PC-3 (cell line): ENCODE measurements at regions of chr11 and their contacts with region 1.

Region 1: DNA sequence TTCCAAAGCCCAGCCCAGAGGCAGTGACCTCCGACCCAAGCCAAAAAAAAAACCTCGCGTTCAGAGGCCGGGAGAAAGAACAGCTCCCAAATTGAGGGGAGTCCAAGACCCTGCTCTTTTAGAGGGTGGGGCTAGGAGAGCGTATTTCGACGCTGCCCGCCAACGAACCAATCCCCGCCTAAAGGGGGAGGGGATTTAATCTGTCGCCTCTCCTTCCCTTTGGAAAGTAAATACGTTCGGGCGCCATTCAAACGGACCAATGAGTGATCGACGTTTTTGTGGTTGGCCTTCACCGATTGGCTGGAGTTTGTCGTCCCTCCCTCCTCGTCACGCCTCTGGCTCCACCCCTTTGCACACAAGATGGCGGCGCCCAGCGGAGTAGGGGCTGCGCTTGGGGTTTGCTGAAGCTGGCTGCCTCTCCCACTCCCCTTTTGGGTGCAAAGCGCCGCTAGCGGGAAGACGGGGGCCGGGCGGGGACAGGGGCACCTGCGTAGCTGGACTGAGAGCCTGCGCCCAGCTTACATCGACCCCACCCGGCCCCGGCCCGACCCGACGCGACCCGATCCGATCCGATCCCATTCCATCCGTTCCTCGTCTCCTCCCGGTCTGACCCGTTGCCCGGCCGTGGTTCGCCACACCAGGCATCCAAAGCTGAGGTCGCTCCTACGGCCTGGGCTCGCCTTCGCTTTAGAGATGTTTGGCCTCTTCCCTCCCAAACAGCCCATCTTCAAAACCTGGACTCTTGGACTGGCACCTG is at the start of gene RNF26:
- DNase-seq: peak; percentile 99
- ATAC-seq: peak; percentile 80
- H3K4me3 ChIP-seq: peak within 1 kb of the TSS; percentile 87
- H3K27ac ChIP-seq: peak within 1 kb of the TSS; percentile 52
- H3K4me1 ChIP-seq: peaks cover 42% of the 10 kb centered on the region
- H3K27me3 ChIP-seq: no peaks in the 10 kb centered on the region
- CTCF ChIP-seq: no peak
- total RNA-seq, gene RNF26: 22.9 and 34.5 TPM in 2 replicates

Region 2: GRCh38 chr11:119317592-119318303 is 16.6 kb before region 1 on chr11:
- CTCF ChIA-PET with region 1: interaction called, 21 read pairs
- POLR2A ChIA-PET with region 1: interaction called, 18 read pairs
- intact Hi-C with region 1: no loop called
- DNase-seq: no peak
- ATAC-seq: no peak
- H3K4me3 ChIP-seq: peak overlapping the region; percentile 43; the same call in 1 of the 2 replicates
- H3K27ac ChIP-seq: peak overlapping the region; percentile 64
- H3K4me1 ChIP-seq: peaks cover 50% of the 10 kb centered on the region
- H3K27me3 ChIP-seq: no peaks in the 10 kb centered on the region
- CTCF ChIP-seq: no peak

Region 3: DNA sequence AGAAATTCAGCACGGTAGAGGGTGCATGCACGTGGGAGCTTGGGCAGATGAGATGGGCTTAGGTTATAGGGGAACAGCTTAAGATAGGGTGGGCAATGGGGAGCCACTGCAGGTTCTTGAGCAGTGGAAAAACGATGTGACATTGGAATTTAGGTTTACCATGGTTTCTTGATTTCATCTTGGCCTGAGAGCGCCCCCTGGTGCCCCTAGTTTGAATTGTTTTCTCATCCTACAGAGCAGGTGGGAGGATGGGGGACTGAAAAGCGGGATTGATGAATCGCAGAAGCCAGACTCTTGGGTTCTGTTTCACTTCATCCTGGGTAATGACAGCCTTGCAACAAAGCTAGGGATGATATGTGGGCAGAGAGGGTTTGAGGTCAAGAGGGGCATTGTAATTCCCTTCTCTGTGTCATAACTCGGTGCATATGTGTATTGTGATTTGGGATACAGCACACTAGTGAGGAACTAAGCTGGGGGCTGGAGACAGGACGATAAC is 10.8 kb before region 1 on chr11:
- CTCF ChIA-PET with region 1: interaction called, 21 read pairs
- POLR2A ChIA-PET with region 1: interaction called, 3 read pairs
- intact Hi-C with region 1: loop called (anchors 1 kb)
- DNase-seq: peak; percentile 86
- ATAC-seq: 0 out of 2 replicates have a peak, but pooled peaks have one; percentile 4
- H3K4me3 ChIP-seq: no peak overlapping the region
- H3K27ac ChIP-seq: no peak overlapping the region
- H3K4me1 ChIP-seq: peaks cover 21% of the 10 kb centered on the region
- H3K27me3 ChIP-seq: no peaks in the 10 kb centered on the region
- CTCF ChIP-seq: peak; percentile 95

Region 4: GRCh38 chr11:119373921-119374631 is 39.7 kb after region 1 on chr11:
- CTCF ChIA-PET with region 1: interaction called, 28 read pairs
- POLR2A ChIA-PET with region 1: interaction called, 3 read pairs
- intact Hi-C with region 1: loop called (anchors 1 kb)
- DNase-seq: peak; percentile 89
- ATAC-seq: peak; percentile 84
- H3K4me3 ChIP-seq: no peak overlapping the region
- H3K27ac ChIP-seq: no peak overlapping the region
- H3K4me1 ChIP-seq: peaks cover 14% of the 10 kb centered on the region
- H3K27me3 ChIP-seq: no peaks in the 10 kb centered on the region
- CTCF ChIP-seq: peak; percentile 98

Region 5: GRCh38 chr11:119400860-119401259 is 66.5 kb after region 1 on chr11:
- CTCF ChIA-PET with region 1: no interaction called
- POLR2A ChIA-PET with region 1: no interaction called
- intact Hi-C with region 1: no loop called
- DNase-seq: no peak
- ATAC-seq: no peak
- H3K4me3 ChIP-seq: no peak overlapping the region
- H3K27ac ChIP-seq: no peak overlapping the region
- H3K4me1 ChIP-seq: no peaks in the 10 kb centered on the region
- H3K27me3 ChIP-seq: no peaks in the 10 kb centered on the region
- CTCF ChIP-seq: no peak

Region 6: DNA sequence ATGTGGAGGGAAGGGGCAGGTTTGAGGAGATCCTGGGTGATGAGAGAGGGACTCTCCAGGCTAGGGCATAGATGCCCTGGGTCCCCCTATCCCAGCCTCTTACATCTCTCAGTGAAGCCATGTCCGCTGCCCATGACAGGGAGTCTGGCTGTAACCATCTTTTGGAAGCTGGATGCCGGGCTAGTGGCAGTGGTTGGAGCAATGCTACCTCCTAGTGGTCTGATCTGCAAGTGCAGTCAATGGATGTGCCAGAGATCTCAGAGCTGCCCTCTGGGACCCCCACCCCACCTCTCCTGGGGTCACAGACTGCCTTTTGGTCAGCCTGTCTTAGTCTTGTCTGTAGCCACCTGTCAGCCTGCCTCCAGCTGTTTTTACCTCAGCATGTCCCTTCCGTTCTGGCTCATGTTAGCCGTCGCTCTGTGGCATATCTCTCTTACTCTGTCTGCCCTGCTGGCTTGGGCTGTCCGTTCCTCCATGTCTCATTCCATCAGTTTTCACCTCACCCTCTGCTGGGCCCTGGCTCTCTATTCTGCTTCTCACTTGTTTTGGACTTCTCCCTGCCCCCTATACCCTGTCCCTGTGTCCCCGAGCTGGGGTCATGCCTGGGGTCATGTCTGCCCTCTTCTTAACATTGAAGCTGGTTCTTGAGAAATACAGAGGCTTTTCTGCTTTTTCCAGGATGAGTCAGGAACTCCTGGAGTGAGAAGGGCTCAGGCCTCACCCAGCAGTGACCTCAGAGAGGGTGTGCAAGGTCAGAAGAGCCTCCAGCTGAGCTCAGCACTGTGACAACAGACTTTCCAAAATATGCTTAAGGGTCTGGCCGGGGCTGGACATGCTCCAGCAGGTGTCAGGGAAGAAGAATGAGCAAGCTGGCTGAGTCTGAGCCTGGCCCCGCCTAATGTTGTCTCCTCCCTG is 140.6 kb after region 1 on chr11:
- CTCF ChIA-PET with region 1: interaction called, 29 read pairs
- POLR2A ChIA-PET with region 1: no interaction called
- intact Hi-C with region 1: no loop called
- DNase-seq: peak; percentile 86
- ATAC-seq: peak; percentile 50
- H3K4me3 ChIP-seq: no peak overlapping the region
- H3K27ac ChIP-seq: no peak overlapping the region
- H3K4me1 ChIP-seq: peaks cover 24% of the 10 kb centered on the region
- H3K27me3 ChIP-seq: no peaks in the 10 kb centered on the region
- CTCF ChIP-seq: peak; percentile 98

Region 7: GRCh38 chr11:119560291-119560690 is 225.9 kb after region 1 on chr11:
- CTCF ChIA-PET with region 1: interaction called, 18 read pairs
- POLR2A ChIA-PET with region 1: no interaction called
- intact Hi-C with region 1: no loop called
- DNase-seq: no peak
- ATAC-seq: no peak
- H3K4me3 ChIP-seq: no peak overlapping the region
- H3K27ac ChIP-seq: no peak overlapping the region
- H3K4me1 ChIP-seq: no peaks in the 10 kb centered on the region
- H3K27me3 ChIP-seq: peaks cover 3% of the 10 kb centered on the region; the same call in 1 of the 2 replicates
- CTCF ChIP-seq: no peak

Region 8: GRCh38 chr11:119578521-119579191 is 244.3 kb after region 1 on chr11:
- CTCF ChIA-PET with region 1: no interaction called
- POLR2A ChIA-PET with region 1: interaction called, 11 read pairs
- intact Hi-C with region 1: no loop called
- DNase-seq: peak; percentile 92
- ATAC-seq: peak; percentile 94
- H3K4me3 ChIP-seq: no peak overlapping the region
- H3K27ac ChIP-seq: peak overlapping the region; percentile 78
- H3K4me1 ChIP-seq: peaks cover 21% of the 10 kb centered on the region
- H3K27me3 ChIP-seq: no peaks in the 10 kb centered on the region
- CTCF ChIP-seq: no peak

Region 9: GRCh38 chr11:119999220-119999619 is 664.9 kb after region 1 on chr11:
- CTCF ChIA-PET with region 1: no interaction called
- POLR2A ChIA-PET with region 1: no interaction called
- intact Hi-C with region 1: no loop called
- DNase-seq: peak; percentile 22
- ATAC-seq: no peak
- H3K4me3 ChIP-seq: no peak overlapping the region
- H3K27ac ChIP-seq: no peak overlapping the region
- H3K4me1 ChIP-seq: no peaks in the 10 kb centered on the region
- H3K27me3 ChIP-seq: peaks cover 65% of the 10 kb centered on the region
- CTCF ChIP-seq: peak; percentile 36; the same call in 1 of the 2 replicates